HCT116 (cell line): ENCODE measurements at regions of chr2 and their contacts with region 1.

Region 1: DNA sequence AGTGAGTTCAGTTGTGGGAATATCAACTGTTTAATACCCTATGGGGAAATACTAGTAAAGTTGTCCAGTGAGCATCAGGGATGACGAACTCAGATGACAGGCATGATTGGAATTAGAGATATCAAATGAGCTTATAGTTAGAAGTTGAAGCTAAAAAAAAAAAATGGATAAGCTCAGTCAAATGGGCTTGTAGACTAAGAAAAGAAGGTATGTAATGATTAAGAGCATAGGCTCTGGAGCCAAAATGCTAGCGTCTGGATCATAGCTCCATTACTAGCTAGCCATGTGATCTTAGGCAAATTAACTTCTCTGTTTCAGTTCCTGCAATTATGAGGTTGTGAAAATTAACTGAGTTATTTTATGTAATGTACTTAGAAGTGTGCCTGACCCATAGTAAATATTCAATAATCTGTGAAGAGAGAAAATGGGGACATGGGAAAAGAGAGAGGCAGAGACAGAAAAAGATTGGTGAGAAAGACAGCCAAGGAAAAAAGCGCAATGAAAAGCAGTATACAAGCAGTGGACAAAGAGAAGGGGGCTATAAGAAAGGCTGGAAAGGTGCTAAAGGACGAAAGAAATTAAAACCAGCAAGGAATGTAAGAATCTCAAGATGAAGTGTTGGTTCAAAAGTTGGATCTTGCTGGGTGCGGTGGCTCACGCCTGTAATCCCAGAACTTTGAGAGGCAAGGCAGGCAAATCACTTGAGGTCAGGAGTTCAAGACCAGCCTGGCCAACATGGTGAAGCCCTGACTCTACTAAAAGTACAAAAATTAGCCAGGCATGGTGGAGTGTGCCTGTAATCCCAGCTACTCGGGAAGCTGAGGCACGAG is 95.6 kb upstream of the SLC39A10 start:
- DNase-seq: no peak
- ATAC-seq: no peak
- H3K4me3 ChIP-seq: no peak overlapping the region
- H3K27ac ChIP-seq: no peak overlapping the region
- H3K4me1 ChIP-seq: no peaks in the 10 kb centered on the region
- H3K27me3 ChIP-seq: no peaks in the 10 kb centered on the region
- CTCF ChIP-seq: no peak
- POLR2A ChIP-seq: no peak
- RAD21 ChIP-seq: no peak

Region 2: DNA sequence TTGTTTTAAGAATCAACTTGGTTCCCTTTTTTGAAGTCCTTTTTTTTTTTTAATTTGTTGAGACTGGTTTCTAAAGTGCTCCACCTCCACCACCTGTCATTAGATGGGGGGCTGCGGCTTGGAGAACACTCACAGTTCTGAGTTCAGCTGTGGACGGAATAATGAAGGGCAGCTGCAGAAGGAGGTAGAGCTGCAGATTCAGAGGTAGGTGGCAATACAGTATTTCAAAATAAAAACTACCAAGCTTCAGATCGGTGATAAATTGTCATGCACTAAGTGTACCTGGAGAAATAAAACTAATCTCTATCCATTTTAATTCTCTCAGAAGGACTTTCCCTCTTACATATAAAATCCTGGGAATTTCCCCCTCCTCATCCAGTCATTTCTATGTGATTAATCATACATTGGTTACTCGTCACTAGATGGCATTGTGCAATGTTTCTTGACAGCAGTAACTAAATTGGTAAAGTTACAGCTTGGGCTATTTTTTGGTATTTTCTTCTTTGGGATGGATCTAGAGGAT is 14.5 kb after region 1 on chr2:
- CTCF ChIA-PET with region 1: interaction called, 3 read pairs
- POLR2A ChIA-PET with region 1: no interaction called
- RAD21 ChIA-PET with region 1: no interaction called
- intact Hi-C with region 1: loop called (anchors 1 kb)
- DNase-seq: peak; percentile 24
- ATAC-seq: peak; percentile 75
- H3K4me3 ChIP-seq: no peak overlapping the region
- H3K27ac ChIP-seq: no peak overlapping the region
- H3K4me1 ChIP-seq: peaks cover 0 to 8% of the 10 kb centered on the region in 2 experiments; a peak in 1 of 4 replicates
- H3K27me3 ChIP-seq: no peaks in the 10 kb centered on the region
- CTCF ChIP-seq: peak in 2 of 3 experiments; percentile 21 to 55; a peak in 2 of 6 replicates
- POLR2A ChIP-seq: no peak
- RAD21 ChIP-seq: peak; percentile 62

Region 3: DNA sequence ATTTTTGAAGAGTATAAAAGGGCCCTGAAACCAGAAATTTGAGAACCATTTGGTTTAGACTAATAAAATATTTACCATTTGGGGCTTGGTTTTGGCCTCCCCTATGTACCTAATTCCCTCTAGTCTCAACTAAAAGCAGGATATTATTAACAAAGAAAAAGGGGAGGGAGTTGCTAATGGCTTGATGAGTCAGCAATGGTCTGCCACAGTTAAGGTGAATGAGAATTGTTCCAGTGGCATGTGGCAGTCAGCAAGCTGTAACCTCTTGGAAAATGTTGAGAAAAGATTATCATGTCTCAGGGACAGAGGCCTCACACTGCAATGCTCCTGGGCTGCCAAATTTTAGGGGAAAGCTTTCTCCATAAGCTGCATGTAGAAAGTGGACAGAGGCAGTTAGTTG is 75.5 kb after region 1 on chr2:
- CTCF ChIA-PET with region 1: no interaction called
- POLR2A ChIA-PET with region 1: no interaction called
- RAD21 ChIA-PET with region 1: no interaction called
- intact Hi-C with region 1: no loop called
- DNase-seq: no peak
- ATAC-seq: no peak
- H3K4me3 ChIP-seq: no peak overlapping the region
- H3K27ac ChIP-seq: no peak overlapping the region
- H3K4me1 ChIP-seq: peaks cover 0 to 5% of the 10 kb centered on the region in 2 experiments; a peak in 2 of 4 replicates
- H3K27me3 ChIP-seq: no peaks in the 10 kb centered on the region
- CTCF ChIP-seq: no peak
- POLR2A ChIP-seq: no peak
- RAD21 ChIP-seq: no peak

Region 4: DNA sequence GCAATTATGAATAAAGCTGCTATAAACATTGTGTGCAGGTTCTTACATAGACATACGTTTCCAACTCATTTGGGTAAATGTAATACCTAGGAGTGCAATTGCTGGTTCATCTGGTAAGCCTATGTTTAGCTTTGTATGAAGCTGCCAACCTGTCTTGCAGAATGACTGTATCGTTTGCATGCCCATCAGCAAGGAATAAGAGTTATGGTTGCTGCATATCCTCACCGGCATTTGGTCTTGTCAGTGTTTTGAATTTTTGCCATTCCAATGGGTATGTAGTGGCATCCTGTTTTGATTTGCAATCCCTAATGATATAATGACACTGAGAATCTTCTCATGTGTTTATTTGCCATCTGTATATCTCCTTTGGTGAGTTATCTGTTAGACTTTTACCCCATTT is 1098.8 kb after region 1 on chr2:
- CTCF ChIA-PET with region 1: no interaction called
- POLR2A ChIA-PET with region 1: no interaction called
- RAD21 ChIA-PET with region 1: no interaction called
- intact Hi-C with region 1: no loop called
- DNase-seq: no peak
- ATAC-seq: no peak
- H3K4me3 ChIP-seq: no peak overlapping the region
- H3K27ac ChIP-seq: no peak overlapping the region
- H3K4me1 ChIP-seq: no peaks in the 10 kb centered on the region
- H3K27me3 ChIP-seq: no peaks in the 10 kb centered on the region
- CTCF ChIP-seq: no peak
- POLR2A ChIP-seq: no peak
- RAD21 ChIP-seq: no peak